AG04449 (cell line): ENCODE measurements at regions of chr17 and their contacts with region 1.

Region 1: DNA sequence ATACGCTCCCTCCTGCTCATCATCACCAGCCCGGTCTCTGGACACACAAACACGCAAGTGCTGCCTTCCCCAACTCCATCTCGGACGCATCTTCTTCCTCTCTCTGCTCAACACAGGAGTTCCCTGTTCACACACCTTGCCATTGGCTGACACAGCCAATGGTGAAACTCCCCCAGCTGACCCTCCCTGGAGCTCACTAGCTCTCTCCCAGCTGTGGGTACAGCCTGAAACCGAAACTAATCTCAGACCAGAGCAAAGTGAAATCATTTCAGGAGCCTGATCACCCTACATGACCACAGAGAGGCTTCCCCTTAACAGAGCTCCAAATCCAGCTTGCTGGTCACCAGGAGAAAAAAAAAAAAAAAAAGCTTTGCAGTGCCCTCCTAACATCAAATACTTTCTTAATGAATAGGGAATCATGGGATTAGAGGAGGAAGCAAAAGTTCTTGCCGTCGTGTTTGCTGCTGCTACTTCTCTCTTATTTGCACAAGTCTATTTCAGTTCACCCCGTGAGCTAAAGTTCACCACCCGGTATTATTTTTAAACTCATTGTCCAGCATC is 8.3 kb downstream of the CUEDC1 start:
- DNase-seq: no peak
- H3K4me3 ChIP-seq: peak overlapping the region; percentile 51
- CTCF ChIP-seq: no peak

Region 2: DNA sequence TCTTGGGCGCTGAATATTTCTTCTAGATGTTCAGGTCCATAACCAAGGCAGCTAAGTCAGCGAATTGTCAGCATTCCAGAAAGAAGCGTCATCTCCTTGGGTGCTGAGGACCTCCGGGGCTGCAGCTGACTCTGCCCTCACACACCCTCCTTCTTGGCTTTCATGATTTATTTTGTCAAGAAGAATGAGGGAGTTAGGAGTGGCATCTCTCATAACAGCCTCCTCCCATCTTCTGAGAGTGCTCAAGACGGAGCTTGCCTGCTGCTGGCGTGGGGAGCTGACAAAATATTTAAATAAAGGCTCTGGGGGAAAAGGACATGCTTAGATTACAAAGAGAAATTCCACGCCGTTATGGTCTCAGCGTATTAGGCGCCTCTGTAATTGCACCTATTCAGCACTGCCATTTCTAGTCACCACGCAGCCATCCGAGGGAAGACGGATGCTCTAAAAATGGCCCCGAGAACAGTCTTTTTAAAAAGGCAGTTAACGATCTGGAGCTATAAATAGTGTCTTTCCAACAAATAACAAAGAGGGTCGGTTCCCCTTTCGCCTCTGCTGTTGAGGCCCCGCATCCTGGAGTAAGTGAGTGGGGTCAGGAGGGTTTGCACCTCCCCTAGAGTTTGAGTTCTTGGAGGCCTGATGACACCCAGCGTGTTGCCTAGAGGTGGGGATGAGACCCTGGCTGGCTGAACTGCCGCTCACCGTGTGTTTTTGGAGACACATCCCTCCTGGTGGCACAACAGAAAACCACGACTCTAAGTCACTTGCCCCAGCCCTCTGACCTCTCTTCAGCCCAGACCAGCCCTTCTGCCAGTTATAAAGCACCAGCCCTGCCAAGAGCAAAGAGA is 388.8 kb before region 1 on chr17:
- CTCF ChIA-PET with region 1: no interaction called
- POLR2A ChIA-PET with region 1: no interaction called
- DNase-seq: peak; percentile 21
- H3K4me3 ChIP-seq: no peak overlapping the region
- CTCF ChIP-seq: no peak

Region 3: GRCh38 chr17:57875309-57876115 is 71.4 kb before region 1 on chr17:
- CTCF ChIA-PET with region 1: interaction called, 56 read pairs
- POLR2A ChIA-PET with region 1: interaction called, 24 read pairs
- DNase-seq: peak; percentile 94
- H3K4me3 ChIP-seq: peak overlapping the region; percentile 31
- CTCF ChIP-seq: peak; percentile 60

Region 4: DNA sequence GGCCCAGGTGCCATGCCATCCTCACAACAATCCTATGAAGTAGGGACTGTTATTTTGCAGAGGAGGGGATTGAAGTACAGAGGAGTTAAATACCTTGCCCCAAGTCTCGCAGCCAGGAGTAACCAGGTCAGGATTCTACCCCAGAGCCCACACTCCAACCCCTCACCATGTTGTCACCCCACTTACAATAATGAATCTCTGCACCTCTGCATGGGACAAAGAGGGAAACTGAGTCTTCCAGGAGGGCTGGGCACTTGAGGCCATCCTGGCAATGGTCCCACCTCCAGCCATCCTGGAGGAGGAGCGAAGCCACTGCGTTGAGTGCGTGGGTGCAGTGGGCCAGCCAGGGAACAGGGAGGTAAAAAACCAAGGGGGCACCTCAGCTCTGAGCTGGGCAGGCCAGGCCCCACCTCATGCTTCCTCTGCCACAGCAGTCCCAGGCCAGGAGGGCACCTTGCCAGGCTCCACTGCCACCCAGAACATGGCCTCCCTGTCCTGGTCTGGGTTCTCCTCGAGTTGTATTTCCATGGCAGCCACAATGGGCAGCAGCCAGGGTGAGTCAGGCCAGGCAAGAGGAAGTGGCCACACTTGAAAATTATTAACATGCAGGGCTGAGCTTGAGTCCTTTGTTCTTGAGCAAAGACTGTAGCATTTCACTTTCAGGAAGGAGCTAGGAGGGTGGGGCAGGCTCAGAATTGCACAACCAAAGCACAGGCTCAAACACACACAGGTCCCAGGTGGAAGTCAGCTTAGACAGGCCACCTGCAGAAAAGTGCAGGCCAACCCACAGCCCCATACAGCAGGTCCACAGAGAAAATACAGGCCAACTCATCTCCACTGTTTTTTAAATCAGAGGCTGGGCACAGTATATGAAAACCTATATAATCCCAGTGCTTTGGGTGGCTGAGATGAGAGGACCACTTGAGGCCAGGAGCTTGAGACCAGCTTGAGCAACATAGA is 43.8 kb before region 1 on chr17:
- CTCF ChIA-PET with region 1: no interaction called
- POLR2A ChIA-PET with region 1: interaction called, 10 read pairs
- DNase-seq: no peak
- H3K4me3 ChIP-seq: no peak overlapping the region
- CTCF ChIP-seq: no peak

Region 5: GRCh38 chr17:57935833-57936807 is 10.8 kb before region 1 on chr17:
- CTCF ChIA-PET with region 1: interaction called, 8 read pairs
- POLR2A ChIA-PET with region 1: interaction called, 10 read pairs
- DNase-seq: no peak
- H3K4me3 ChIP-seq: peak overlapping the region; percentile 20
- CTCF ChIP-seq: no peak